A673 (cell line): ENCODE measurements at regions of chr10 and their contacts with region 1.

Region 1: GRCh38 chr10:69716711-69717560 is 84.8 kb upstream of the COL13A1 start:
- DNase-seq: peak; percentile 60
- H3K4me3 ChIP-seq: no peak overlapping the region
- H3K27ac ChIP-seq: no peak overlapping the region
- H3K4me1 ChIP-seq: no peaks in the 10 kb centered on the region
- H3K27me3 ChIP-seq: no peaks in the 10 kb centered on the region
- CTCF ChIP-seq: peak; percentile 87

Region 2: DNA sequence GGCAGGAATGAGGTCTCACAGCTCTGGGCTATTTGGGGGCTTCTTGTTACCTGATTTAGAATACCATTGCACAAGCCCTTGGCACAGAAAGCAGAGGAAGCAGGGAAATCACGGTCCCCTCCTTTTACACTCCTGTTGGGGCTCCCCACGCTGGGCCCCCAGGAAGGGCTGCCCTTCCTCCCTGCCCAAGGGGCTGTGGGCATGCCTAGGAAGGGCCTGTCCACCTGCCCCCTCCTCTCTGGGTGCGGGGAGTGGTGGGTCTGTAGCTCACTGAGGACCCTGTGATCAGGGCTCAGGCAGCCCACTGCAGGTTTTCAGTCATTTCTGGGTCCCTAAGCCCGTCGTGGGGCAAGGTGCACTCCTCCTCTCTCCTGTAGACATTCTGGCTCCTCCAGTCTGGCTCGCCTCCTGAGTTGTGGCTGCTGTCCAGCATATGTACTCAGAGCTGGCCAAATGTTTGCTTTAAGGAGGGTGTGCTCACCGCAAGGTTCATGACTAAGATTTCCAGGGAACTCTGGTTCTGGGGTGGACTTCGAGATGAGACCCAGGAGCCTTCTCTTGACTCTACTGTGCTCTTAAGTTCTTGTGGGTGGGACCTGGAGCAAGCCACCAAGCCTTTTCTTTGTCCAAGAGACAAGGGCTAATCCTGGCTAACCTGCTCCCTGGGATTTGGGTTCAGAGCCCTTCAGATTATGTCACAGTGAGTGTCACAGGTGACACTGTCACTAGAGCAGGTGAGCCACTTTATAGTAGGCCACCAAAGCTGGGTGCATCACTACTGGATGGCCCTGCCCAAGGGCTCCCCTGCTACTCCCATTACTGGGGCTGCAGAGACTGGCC is 356.2 kb before region 1 on chr10:
- CTCF ChIA-PET with region 1: no interaction called
- POLR2A ChIA-PET with region 1: no interaction called
- intact Hi-C with region 1: no loop called
- DNase-seq: no peak
- H3K4me3 ChIP-seq: no peak overlapping the region
- H3K27ac ChIP-seq: no peak overlapping the region
- H3K4me1 ChIP-seq: no peaks in the 10 kb centered on the region
- H3K27me3 ChIP-seq: no peaks in the 10 kb centered on the region
- CTCF ChIP-seq: no peak

Region 3: DNA sequence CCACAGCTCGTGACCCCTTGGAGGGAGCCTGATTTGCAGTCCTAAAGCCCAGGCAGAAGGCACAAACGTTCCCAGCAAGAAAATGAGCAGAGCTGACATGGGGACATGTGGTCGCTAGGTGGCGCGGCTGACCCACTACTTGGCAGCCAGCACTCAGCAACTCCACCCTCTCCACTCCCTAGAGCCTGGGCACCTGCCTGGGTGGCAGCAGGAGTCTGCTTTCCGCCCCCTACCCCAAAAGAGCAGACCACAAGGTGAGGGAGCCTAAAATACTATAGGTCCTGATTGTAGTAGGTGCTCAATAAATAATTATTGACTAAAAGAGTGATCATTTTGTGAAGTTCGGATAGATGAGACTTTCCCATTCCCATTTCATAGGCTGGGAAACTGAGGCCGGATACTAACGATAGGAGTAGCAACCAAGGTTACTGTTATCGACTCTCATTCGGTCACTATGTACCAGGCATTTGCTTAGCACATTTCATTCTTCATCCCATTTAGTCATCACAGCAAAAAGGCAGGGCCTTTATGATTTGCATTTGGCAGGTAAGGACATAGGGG is 201.2 kb before region 1 on chr10:
- CTCF ChIA-PET with region 1: no interaction called
- POLR2A ChIA-PET with region 1: no interaction called
- intact Hi-C with region 1: loop called (anchors 5 kb)
- DNase-seq: peak; percentile 76
- H3K4me3 ChIP-seq: no peak overlapping the region
- H3K27ac ChIP-seq: no peak overlapping the region
- H3K4me1 ChIP-seq: no peaks in the 10 kb centered on the region
- H3K27me3 ChIP-seq: peaks cover 29% of the 10 kb centered on the region
- CTCF ChIP-seq: peak; percentile 90

Region 4: DNA sequence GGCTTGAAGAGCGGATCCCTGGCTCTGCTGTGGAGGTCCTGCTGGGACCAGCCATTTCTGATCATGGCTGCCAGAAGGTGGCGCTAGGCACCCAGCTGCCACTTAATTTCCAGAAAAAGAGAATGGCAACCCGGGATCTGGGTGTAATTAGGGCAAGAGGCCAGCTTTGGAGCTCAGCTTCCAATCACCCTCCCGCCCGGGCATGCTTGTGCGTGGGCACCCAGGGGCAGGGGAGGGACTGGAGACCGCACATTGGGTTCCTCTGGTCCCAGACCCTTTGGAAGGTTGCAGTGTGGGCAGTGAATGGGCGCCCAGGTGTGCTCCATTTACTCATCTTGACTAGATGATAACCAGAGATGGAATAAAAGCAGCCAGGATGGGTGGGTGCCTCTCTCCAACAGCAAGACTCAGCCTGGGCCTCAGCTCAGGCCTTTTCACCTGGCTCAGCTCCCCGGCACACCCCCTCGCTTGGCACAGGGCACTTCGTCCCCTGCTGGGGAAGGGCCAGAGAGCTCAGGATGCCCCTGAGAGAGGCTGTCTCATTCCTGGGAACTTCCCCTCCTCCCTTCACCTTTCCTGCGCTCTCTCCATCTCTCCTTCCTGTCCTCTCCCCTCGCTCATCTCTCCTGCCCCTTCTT is 72.2 kb before region 1 on chr10:
- CTCF ChIA-PET with region 1: no interaction called
- POLR2A ChIA-PET with region 1: no interaction called
- intact Hi-C with region 1: loop called (anchors 1 kb)
- DNase-seq: peak; percentile 77
- H3K4me3 ChIP-seq: no peak overlapping the region
- H3K27ac ChIP-seq: no peak overlapping the region
- H3K4me1 ChIP-seq: no peaks in the 10 kb centered on the region
- H3K27me3 ChIP-seq: no peaks in the 10 kb centered on the region
- CTCF ChIP-seq: peak; percentile 91